ENCODE measurements at regions of chr1 and their contacts with region 1.

Region 1: GRCh38 chr1:171741872-171742576 is at the start of gene VAMP4:
- DNase-seq: peak; percentile 94
- H3K4me3 ChIP-seq: peak within 1 kb of the TSS; percentile 75 to 97 (median 90)
- H3K27ac ChIP-seq: peak within 1 kb of the TSS; percentile 91 to 98 (median 96)
- H3K4me1 ChIP-seq: peaks cover 0 to 29% (median 18%) of the 10 kb centered on the region in 4 donors
- H3K27me3 ChIP-seq: no peaks in the 10 kb centered on the region
- CTCF ChIP-seq: no peak
- EP300 ChIP-seq: peak in 1 of 4 donors; percentile 39
- POLR2A ChIP-seq: peak; percentile 74 to 86
- total RNA-seq, gene VAMP4: 13.0 to 16.9 (median 15.7) TPM

Region 2: GRCh38 chr1:171485375-171486047 is 256.5 kb before region 1 on chr1 and contains the start of gene PRRC2C:
- intact Hi-C with region 1: loop called (anchors 10 kb)
- DNase-seq: peak; percentile 99
- H3K4me3 ChIP-seq: peak within 1 kb of the TSS; percentile 65 to 91 (median 88)
- H3K27ac ChIP-seq: peak within 1 kb of the TSS; percentile 98 to 99 (median 98)
- H3K4me1 ChIP-seq: peaks cover 0 to 38% (median 34%) of the 10 kb centered on the region in 4 donors
- H3K27me3 ChIP-seq: no peaks in the 10 kb centered on the region
- CTCF ChIP-seq: peak in 2 of 4 experiments; percentile 16 to 74
- EP300 ChIP-seq: peak in 1 of 4 donors; percentile 63
- POLR2A ChIP-seq: peak; percentile 59 to 60
- total RNA-seq, gene PRRC2C: 46.4 to 80.0 (median 53.1) TPM

Region 3: DNA sequence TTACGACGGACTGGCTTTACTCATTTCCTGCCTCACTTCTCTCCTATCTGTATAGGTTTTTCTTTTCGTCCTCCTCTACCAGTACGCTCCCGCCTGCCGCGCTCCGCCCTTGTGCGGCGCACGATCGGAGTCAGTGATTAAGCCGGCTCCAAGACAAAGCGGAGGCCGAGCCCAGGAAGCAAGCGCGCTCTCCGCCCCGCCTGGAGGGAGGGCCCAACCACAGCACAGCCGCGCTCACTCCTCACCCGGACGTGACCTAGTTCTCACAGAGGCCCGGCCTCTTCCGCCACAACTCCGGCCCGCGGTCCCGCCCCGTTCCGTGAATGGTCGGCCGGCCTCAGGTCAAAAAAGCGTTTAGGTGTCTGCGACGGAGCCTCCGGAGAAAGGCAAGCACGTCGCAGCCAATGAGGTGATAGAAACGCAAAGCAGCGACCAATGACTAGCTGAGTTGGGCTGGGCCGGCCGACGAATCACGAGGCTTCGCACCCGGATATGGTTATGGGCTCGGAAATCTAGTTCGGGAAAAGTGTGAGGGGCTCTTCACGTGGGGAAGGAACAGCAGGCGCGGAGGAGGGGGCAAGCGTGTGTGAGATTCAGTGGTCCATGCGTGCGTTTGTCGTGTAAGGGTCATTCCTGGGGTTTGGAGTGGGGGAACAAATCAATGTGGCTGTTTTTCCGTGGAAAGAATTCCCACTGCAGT is 39.3 kb after region 1 on chr1 and contains the start of gene METTL13:
- intact Hi-C with region 1: loop called (anchors 1 kb)
- DNase-seq: peak; percentile 99
- H3K4me3 ChIP-seq: peak within 1 kb of the TSS; percentile 56 to 84 (median 74)
- H3K27ac ChIP-seq: peak within 1 kb of the TSS; percentile 84 to 90 (median 89)
- H3K4me1 ChIP-seq: peaks cover 0 to 43% (median 33%) of the 10 kb centered on the region in 4 donors
- H3K27me3 ChIP-seq: no peaks in the 10 kb centered on the region
- CTCF ChIP-seq: no peak
- EP300 ChIP-seq: no peak
- POLR2A ChIP-seq: peak; percentile 94 to 95
- total RNA-seq, gene METTL13: 8.4 to 21.8 (median 17.0) TPM

Region 4: DNA sequence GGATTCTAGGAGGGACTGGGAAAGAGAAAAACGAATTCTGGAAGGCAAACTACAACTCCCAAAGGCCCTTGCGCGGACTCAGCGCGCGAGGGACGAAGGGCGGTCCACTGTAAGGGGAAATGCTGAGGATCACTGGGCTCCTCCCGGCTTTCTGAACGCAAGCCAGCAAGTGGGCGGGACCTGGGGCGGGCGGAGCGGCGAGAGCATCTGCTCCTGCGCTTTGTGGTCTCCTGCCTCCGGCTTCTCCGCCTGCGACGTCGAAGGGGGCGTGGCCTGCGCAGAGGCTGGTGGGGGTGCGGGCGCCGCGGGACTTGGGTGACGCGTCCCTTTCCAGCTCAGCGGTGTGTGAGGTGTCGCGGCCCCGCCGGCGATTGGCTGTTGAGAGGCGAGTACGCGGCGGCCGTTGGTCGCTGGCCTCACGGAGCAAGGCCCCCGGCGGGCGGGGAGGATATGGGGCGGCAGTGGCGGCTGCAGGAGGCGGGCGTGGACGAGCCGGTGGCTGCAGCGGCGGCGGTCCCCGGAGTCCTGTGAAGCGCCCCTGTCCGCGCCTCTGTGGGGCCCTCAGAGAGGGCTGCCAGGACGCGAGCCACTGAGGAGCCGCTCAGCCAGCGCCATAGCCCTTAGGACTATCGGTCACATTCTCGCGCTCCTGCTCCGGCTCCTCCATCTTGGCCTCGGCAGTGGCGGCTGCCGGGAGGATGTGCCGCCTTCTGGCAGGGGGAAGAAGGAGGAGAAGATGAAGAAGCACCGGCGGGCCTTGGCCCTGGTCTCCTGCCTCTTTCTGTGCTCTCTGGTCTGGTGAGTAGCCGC is 790.9 kb after region 1 on chr1 and contains the start of gene SUCO:
- intact Hi-C with region 1: loop called (anchors 2 kb)
- DNase-seq: peak; percentile 100
- H3K4me3 ChIP-seq: peak within 1 kb of the TSS; percentile 82 to 94 (median 89)
- H3K27ac ChIP-seq: peak within 1 kb of the TSS; percentile 96 to 99 (median 98)
- H3K4me1 ChIP-seq: peaks cover 0 to 42% (median 23%) of the 10 kb centered on the region in 4 donors
- H3K27me3 ChIP-seq: no peaks in the 10 kb centered on the region
- CTCF ChIP-seq: no peak
- EP300 ChIP-seq: peak in 1 of 4 donors; percentile 34
- POLR2A ChIP-seq: peak; percentile 86 to 93
- total RNA-seq, gene SUCO: 27.4 to 36.6 (median 33.4) TPM

Measured in sigmoid colon (tissue), 7 donors.